ENCODE measurements at regions of chr10 and their contacts with region 1.

Region 1: DNA sequence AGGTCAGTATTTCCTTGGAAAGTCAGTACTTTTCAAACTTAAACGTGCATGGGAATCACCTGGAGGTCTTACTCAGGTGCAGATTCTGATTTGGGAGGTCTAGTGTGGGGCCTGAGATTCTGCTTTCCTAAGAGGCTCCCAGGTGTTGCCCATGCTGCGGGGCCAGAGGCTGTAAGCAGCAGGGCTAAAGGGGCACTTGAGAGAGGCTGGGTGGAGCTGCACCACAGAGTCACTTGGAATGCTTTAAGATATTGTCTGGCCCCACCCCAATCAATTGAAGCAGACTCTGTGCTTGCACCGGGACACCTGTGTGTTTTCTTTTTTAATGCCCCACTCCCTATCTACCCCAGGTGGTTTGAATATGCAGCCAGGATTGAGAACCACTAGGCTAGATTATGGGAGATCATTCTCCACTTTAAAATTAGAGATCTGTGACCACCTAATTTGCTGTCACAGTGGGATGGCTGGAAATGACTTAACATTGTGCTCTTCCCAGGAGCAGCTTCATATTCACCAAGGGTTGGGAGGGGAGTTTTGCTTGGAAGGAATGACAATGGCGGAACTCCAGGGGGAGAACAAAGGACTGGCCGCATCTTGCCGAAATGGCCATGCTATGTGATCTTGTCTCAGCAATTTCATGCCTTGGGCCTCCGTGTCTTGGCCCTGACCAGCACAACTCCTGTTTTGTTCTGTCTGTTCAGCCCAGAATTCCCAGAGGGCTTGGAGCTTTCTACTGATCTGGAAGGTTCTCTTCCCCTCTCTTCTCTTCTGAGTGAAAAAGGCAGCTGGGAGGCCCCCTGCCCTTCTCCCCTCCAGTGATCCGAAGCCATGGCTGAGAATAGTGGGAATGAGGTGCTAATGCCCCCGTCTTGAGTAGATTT is 80.2 kb downstream of the FAM241B start:
- DNase-seq: no peak
- H3K4me3 ChIP-seq: no peak overlapping the region
- H3K27ac ChIP-seq: no peak overlapping the region
- H3K4me1 ChIP-seq: no peaks in the 10 kb centered on the region
- H3K27me3 ChIP-seq: peaks cover 0 to 18% (median 0%) of the 10 kb centered on the region in 3 donors
- CTCF ChIP-seq: no peak
- EP300 ChIP-seq: no peak
- POLR2A ChIP-seq: no peak

Region 2: GRCh38 chr10:69644658-69645295 is 65.5 kb before region 1 on chr10:
- intact Hi-C with region 1: loop called (anchors 5 kb)
- DNase-seq: peak; percentile 61 to 85
- H3K4me3 ChIP-seq: no peak overlapping the region
- H3K27ac ChIP-seq: no peak overlapping the region
- H3K4me1 ChIP-seq: peaks cover 0 to 3% (median 0%) of the 10 kb centered on the region in 4 donors
- H3K27me3 ChIP-seq: peaks cover 0 to 22% (median 8%) of the 10 kb centered on the region in 3 donors
- CTCF ChIP-seq: peak in 5 of 7 experiments; percentile 54 to 76 (median 68)
- EP300 ChIP-seq: no peak
- POLR2A ChIP-seq: no peak

Region 3: DNA sequence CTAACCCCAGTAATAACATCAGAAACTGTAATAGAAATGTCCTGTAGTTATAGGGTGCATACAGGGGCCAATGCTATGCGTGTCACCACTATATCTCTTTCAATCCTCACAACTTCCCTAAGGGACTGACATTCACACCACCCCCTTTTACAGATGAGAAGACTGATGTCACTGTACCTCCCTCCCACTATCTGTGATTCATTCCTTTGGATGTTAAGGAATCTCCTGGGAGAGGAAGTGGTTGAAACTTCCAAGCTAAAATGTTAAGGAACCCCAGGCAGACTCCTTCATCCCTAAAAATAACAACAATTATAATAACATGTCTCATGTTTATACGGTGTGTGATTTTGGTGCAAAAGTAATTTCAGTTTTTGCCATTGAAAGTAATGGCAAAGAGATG is 96.9 kb after region 1 on chr10:
- intact Hi-C with region 1: no loop called
- DNase-seq: no peak
- H3K4me3 ChIP-seq: no peak overlapping the region
- H3K27ac ChIP-seq: no peak overlapping the region
- H3K4me1 ChIP-seq: peaks cover 7 to 17% (median 12%) of the 10 kb centered on the region in 4 donors
- H3K27me3 ChIP-seq: peaks cover 2 to 24% (median 19%) of the 10 kb centered on the region in 3 donors
- CTCF ChIP-seq: no peak
- EP300 ChIP-seq: no peak
- POLR2A ChIP-seq: no peak